WTC11 (cell line): ENCODE measurements at regions of chr11 and their contacts with region 1.

Region 1: GRCh38 chr11:62427630-62428233 is 8.9 kb downstream of the SCGB1A1 start:
- DNase-seq: no peak
- ATAC-seq: no peak
- H3K4me3 Mint-ChIP-seq: no peak overlapping the region
- H3K27ac Mint-ChIP-seq: peak overlapping the region; percentile 2; the same call in 1 of the 2 replicates
- H3K4me1 Mint-ChIP-seq: peaks cover 8% of the 10 kb centered on the region
- H3K27me3 Mint-ChIP-seq: peaks cover 22% of the 10 kb centered on the region
- CTCF ChIP-seq: no peak

Region 2: GRCh38 chr11:62394825-62395538 is 32.8 kb before region 1 on chr11:
- CTCF ChIA-PET with region 1: interaction called, 138 read pairs
- POLR2A ChIA-PET with region 1: no interaction called
- DNase-seq: peak; percentile 78
- ATAC-seq: peak; percentile 71
- H3K4me3 Mint-ChIP-seq: peak overlapping the region; percentile 59
- H3K27ac Mint-ChIP-seq: no peak overlapping the region; the same call in 1 of the 2 replicates
- H3K4me1 Mint-ChIP-seq: peaks cover 22% of the 10 kb centered on the region
- H3K27me3 Mint-ChIP-seq: no peaks in the 10 kb centered on the region
- CTCF ChIP-seq: peak; percentile 61

Region 3: GRCh38 chr11:62444236-62444833 is 16.6 kb after region 1 on chr11:
- CTCF ChIA-PET with region 1: interaction called, 33 read pairs
- POLR2A ChIA-PET with region 1: interaction called, 3 read pairs
- DNase-seq: peak; percentile 41
- ATAC-seq: peak; percentile 65
- H3K4me3 Mint-ChIP-seq: peak overlapping the region; percentile 28
- H3K27ac Mint-ChIP-seq: peak overlapping the region; percentile 67; the same call in 1 of the 2 replicates
- H3K4me1 Mint-ChIP-seq: peaks cover 14% of the 10 kb centered on the region
- H3K27me3 Mint-ChIP-seq: no peaks in the 10 kb centered on the region
- CTCF ChIP-seq: no peak

Region 4: GRCh38 chr11:62472012-62472884 is 44.5 kb after region 1 on chr11:
- CTCF ChIA-PET with region 1: interaction called, 11 read pairs
- POLR2A ChIA-PET with region 1: no interaction called
- DNase-seq: no peak
- ATAC-seq: no peak
- H3K4me3 Mint-ChIP-seq: no peak overlapping the region
- H3K27ac Mint-ChIP-seq: peak overlapping the region; percentile 56; the same call in 1 of the 2 replicates
- H3K4me1 Mint-ChIP-seq: no peaks in the 10 kb centered on the region
- H3K27me3 Mint-ChIP-seq: no peaks in the 10 kb centered on the region; the same call in 1 of the 2 replicates
- CTCF ChIP-seq: no peak

Region 5: DNA sequence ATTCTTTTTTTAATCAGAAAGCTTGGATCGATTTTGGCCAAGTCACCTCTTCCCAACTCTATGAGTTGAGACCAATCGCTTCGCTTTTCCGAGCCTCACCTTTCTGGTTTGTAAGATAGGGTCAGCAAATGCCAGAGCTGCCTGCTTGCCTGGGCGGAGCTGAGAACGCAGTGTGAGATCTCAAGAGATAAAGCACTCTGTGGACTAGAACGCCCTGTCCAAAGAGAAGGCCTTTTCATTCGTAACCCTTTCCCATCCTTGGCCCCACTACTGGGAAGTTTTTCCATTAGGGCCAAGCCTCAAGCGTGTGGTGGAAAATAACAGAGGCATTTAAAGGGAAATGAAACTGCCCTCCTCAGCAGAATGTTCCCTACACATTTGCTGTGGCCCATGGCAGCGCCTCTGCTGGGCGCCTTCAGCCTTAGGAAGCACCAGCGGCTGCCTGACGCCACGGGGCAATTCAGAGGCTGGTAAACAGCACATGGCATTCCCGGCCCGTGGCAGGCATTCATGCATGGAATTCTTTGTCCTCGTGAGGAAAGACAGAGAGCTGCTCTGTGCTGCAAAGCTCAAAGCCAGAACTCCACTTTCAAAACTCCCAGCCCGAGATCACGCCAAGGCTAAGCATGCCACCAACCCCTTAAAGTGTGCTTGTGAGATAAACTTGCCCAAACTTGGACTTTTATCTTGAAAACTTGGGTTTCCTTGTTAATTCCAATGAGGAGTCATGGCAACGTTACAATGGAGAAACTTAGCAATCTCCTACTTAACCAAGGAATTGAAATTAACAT is 80.7 kb after region 1 on chr11:
- CTCF ChIA-PET with region 1: interaction called, 41 read pairs
- POLR2A ChIA-PET with region 1: interaction called, 5 read pairs
- DNase-seq: peak; percentile 75
- ATAC-seq: peak; percentile 75
- H3K4me3 Mint-ChIP-seq: peak overlapping the region; percentile 32
- H3K27ac Mint-ChIP-seq: peak overlapping the region; percentile 71
- H3K4me1 Mint-ChIP-seq: peaks cover 37% of the 10 kb centered on the region
- H3K27me3 Mint-ChIP-seq: peaks cover 42% of the 10 kb centered on the region
- CTCF ChIP-seq: no peak

Region 6: DNA sequence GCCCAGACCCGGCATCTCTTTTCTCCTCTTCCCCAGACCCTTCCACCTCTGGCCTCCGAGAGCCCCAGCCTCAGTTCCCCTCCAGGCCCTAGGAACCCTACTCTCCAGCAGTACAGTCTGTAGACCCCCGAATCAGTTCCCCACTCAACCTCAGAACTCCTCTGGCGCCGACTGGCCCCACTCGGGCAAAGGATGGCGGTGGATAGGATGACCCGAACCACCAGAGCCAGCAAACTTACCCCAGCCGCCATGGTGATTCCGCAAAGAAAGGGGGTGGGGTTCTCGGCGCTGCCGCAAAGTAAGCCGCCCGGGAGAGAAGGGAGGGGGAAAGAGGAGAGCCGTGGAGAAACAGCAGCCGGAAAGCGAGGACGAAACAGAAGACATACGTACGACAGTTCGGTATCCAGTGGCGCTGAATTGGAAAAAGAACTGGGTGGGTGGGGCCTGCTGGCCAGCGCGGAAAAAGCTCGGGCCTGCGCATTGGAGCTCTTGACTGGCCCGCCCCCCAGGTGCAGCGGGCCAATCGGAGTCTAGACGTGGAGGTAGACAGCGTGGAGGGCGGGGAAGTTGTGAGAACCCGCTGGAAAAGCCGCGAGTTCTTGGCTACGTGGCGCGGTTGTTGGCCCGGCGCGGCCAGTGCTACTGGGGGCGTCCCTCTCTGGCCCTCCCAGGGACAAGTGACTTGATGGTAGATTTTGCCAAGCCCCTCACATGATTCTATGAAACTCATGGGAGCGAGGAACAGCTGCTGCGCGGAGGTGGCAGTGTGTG is 146.0 kb after region 1 on chr11 and contains the start of gene EEF1G:
- CTCF ChIA-PET with region 1: interaction called, 33 read pairs
- POLR2A ChIA-PET with region 1: interaction called, 3 read pairs
- DNase-seq: peak; percentile 98
- ATAC-seq: peak; percentile 97
- H3K4me3 Mint-ChIP-seq: peak within 1 kb of the TSS; percentile 99
- H3K27ac Mint-ChIP-seq: peak within 1 kb of the TSS; percentile 96
- H3K4me1 Mint-ChIP-seq: peaks cover 37% of the 10 kb centered on the region
- H3K27me3 Mint-ChIP-seq: no peaks in the 10 kb centered on the region
- CTCF ChIP-seq: no peak
- total RNA-seq, gene EEF1G: 1,667 to 1,857 TPM (median 1,846 TPM) in 3 replicates